HCT116 (cell line): ENCODE measurements at regions of chr11 and their contacts with region 1.

Region 1: GRCh38 chr11:8033305-8034105 is 46.4 kb downstream of the EIF3F start:
- DNase-seq: peak; percentile 43
- ATAC-seq: peak; percentile 95
- H3K4me3 ChIP-seq: peak overlapping the region in 1 of 2 experiments; percentile 13; a peak in 1 of 4 replicates
- H3K27ac ChIP-seq: no peak overlapping the region
- H3K4me1 ChIP-seq: peaks cover 0 to 10% of the 10 kb centered on the region in 2 experiments; a peak in 2 of 4 replicates
- H3K27me3 ChIP-seq: no peaks in the 10 kb centered on the region; the same call in 1 of the 2 replicates
- CTCF ChIP-seq: peak; percentile 82 to 89 (median 87)
- POLR2A ChIP-seq: no peak
- RAD21 ChIP-seq: peak; percentile 77

Region 2: DNA sequence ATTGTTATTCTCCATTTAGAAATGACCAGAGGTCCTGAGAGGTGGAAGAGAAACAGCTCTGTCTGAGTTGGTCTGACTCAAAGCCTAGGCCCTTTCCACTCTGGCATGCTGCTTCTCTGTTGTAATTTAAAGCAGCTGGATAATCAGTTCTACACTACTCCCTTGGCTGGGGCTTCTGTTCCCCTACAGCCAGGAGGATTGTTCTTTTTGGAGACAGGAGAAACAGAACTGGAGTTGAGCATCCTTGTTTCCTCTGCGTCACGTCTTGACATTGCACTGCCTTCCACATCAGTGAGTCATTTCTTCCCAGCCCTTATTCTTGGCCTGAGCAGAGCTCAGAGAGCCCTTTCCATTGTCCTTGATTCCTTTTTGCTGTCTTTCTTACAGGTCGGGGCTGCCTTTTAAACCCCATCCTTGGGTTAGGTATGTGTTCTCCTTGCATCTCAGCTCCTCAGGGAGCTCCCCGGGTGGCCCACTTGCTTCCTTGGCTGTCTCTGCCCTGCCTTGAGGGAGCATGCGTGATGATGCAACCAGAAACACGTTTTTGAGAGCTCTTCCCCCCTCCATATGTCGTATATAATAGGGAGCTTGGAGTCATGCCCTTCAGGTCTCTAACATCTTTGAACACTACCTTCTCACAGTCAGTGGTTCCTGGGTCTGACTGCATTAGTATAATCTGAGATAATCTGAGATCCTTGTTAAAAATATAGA is 395.9 kb before region 1 on chr11:
- CTCF ChIA-PET with region 1: no interaction called
- POLR2A ChIA-PET with region 1: no interaction called
- RAD21 ChIA-PET with region 1: no interaction called
- intact Hi-C with region 1: no loop called
- DNase-seq: no peak
- ATAC-seq: no peak
- H3K4me3 ChIP-seq: no peak overlapping the region
- H3K27ac ChIP-seq: no peak overlapping the region
- H3K4me1 ChIP-seq: no peaks in the 10 kb centered on the region
- H3K27me3 ChIP-seq: no peaks in the 10 kb centered on the region
- CTCF ChIP-seq: no peak
- POLR2A ChIP-seq: no peak
- RAD21 ChIP-seq: no peak

Region 3: GRCh38 chr11:8006349-8006977 is 27.0 kb before region 1 on chr11:
- CTCF ChIA-PET with region 1: interaction called, 11 read pairs
- POLR2A ChIA-PET with region 1: no interaction called
- RAD21 ChIA-PET with region 1: interaction called in 1 of 2 experiments, 4 read pairs
- intact Hi-C with region 1: no loop called
- DNase-seq: peak; percentile 54
- ATAC-seq: peak; percentile 97
- H3K4me3 ChIP-seq: no peak overlapping the region
- H3K27ac ChIP-seq: no peak overlapping the region
- H3K4me1 ChIP-seq: no peaks in the 10 kb centered on the region
- H3K27me3 ChIP-seq: no peaks in the 10 kb centered on the region
- CTCF ChIP-seq: peak; percentile 86 to 91 (median 91)
- POLR2A ChIP-seq: no peak
- RAD21 ChIP-seq: peak; percentile 96

Region 4: GRCh38 chr11:8070417-8071115 is 37.1 kb after region 1 on chr11:
- CTCF ChIA-PET with region 1: interaction called, 6 read pairs
- POLR2A ChIA-PET with region 1: no interaction called
- RAD21 ChIA-PET with region 1: no interaction called
- intact Hi-C with region 1: loop called (anchors 1 kb)
- DNase-seq: peak; percentile 21
- ATAC-seq: peak; percentile 82
- H3K4me3 ChIP-seq: no peak overlapping the region
- H3K27ac ChIP-seq: no peak overlapping the region
- H3K4me1 ChIP-seq: peaks cover 14 to 15% of the 10 kb centered on the region in 2 experiments
- H3K27me3 ChIP-seq: 0 out of 2 replicates have a peak, but pooled peaks cover 3% of the 10 kb centered on the region
- CTCF ChIP-seq: peak; percentile 35 to 50 (median 41); a peak in 5 of 6 replicates
- POLR2A ChIP-seq: no peak
- RAD21 ChIP-seq: peak; percentile 56

Region 5: GRCh38 chr11:8087185-8087584 is 53.7 kb after region 1 on chr11:
- CTCF ChIA-PET with region 1: interaction called, 32 read pairs
- POLR2A ChIA-PET with region 1: no interaction called
- RAD21 ChIA-PET with region 1: interaction called, 3 to 9 read pairs
- intact Hi-C with region 1: loop called (anchors 1 kb)
- DNase-seq: no peak
- ATAC-seq: peak; percentile 58
- H3K4me3 ChIP-seq: no peak overlapping the region
- H3K27ac ChIP-seq: no peak overlapping the region
- H3K4me1 ChIP-seq: no peaks in the 10 kb centered on the region
- H3K27me3 ChIP-seq: no peaks in the 10 kb centered on the region
- CTCF ChIP-seq: peak in 2 of 3 experiments; percentile 21 to 35; a peak in 3 of 6 replicates
- POLR2A ChIP-seq: no peak
- RAD21 ChIP-seq: peak; percentile 42; the same call in 1 of the 2 replicates

Region 6: GRCh38 chr11:8092587-8093424 is 59.3 kb after region 1 on chr11:
- CTCF ChIA-PET with region 1: interaction called, 32 read pairs
- POLR2A ChIA-PET with region 1: no interaction called
- RAD21 ChIA-PET with region 1: interaction called, 3 to 9 read pairs
- intact Hi-C with region 1: loop called (anchors 1 kb)
- DNase-seq: peak; percentile 56
- ATAC-seq: peak; percentile 96
- H3K4me3 ChIP-seq: no peak overlapping the region
- H3K27ac ChIP-seq: no peak overlapping the region
- H3K4me1 ChIP-seq: peaks cover 0 to 10% of the 10 kb centered on the region in 2 experiments; a peak in 2 of 4 replicates
- H3K27me3 ChIP-seq: no peaks in the 10 kb centered on the region
- CTCF ChIP-seq: peak; percentile 59 to 86 (median 80); a peak in 5 of 6 replicates
- POLR2A ChIP-seq: no peak
- RAD21 ChIP-seq: peak; percentile 43

Region 7: GRCh38 chr11:8786933-8787332 is 753.4 kb after region 1 on chr11:
- CTCF ChIA-PET with region 1: no interaction called
- POLR2A ChIA-PET with region 1: no interaction called
- RAD21 ChIA-PET with region 1: no interaction called
- intact Hi-C with region 1: no loop called
- DNase-seq: no peak
- ATAC-seq: no peak; the same call in 1 of the 2 replicates
- H3K4me3 ChIP-seq: no peak overlapping the region
- H3K27ac ChIP-seq: no peak overlapping the region
- H3K4me1 ChIP-seq: no peaks in the 10 kb centered on the region
- H3K27me3 ChIP-seq: no peaks in the 10 kb centered on the region
- CTCF ChIP-seq: peak in 1 of 3 experiments; percentile 41; a peak in 1 of 6 replicates
- POLR2A ChIP-seq: no peak
- RAD21 ChIP-seq: no peak